ENCODE measurements at regions of chr12 and their contacts with region 1.

Region 1: GRCh38 chr12:56266693-56267442 is at the start of gene COQ10A:
- DNase-seq: peak; percentile 86 to 95
- ATAC-seq: peak; percentile 91 to 98 (median 91)
- H3K4me3 ChIP-seq: peak within 1 kb of the TSS; percentile 88
- H3K4me3 Mint-ChIP-seq: peak within 1 kb of the TSS; percentile 95
- H3K27ac ChIP-seq: peak within 1 kb of the TSS; percentile 99
- H3K27ac Mint-ChIP-seq: peak within 1 kb of the TSS; percentile 94 to 95
- H3K4me1 ChIP-seq: peaks cover 16% of the 10 kb centered on the region
- H3K4me1 Mint-ChIP-seq: peaks cover 9 to 20% of the 10 kb centered on the region in 2 donors
- H3K27me3 ChIP-seq: no peaks in the 10 kb centered on the region
- H3K27me3 Mint-ChIP-seq: no peaks in the 10 kb centered on the region
- CTCF ChIP-seq: peak; percentile 46
- total RNA-seq, gene COQ10A: 27.2 to 37.9 (median 30.2) TPM

Region 2: GRCh38 chr12:56299853-56300643 is 33.2 kb after region 1 on chr12 and contains the start of gene CS:
- intact Hi-C with region 1: loop called (anchors 2 kb)
- DNase-seq: peak; percentile 98 to 99
- ATAC-seq: peak; percentile 95 to 99 (median 96)
- H3K4me3 ChIP-seq: peak within 1 kb of the TSS; percentile 72
- H3K4me3 Mint-ChIP-seq: peak within 1 kb of the TSS; percentile 93
- H3K27ac ChIP-seq: peak within 1 kb of the TSS; percentile 88
- H3K27ac Mint-ChIP-seq: peak within 1 kb of the TSS; percentile 97 to 98
- H3K4me1 ChIP-seq: peaks cover 34% of the 10 kb centered on the region
- H3K4me1 Mint-ChIP-seq: peaks cover 55 to 56% of the 10 kb centered on the region in 2 donors
- H3K27me3 ChIP-seq: no peaks in the 10 kb centered on the region
- H3K27me3 Mint-ChIP-seq: no peaks in the 10 kb centered on the region
- CTCF ChIP-seq: no peak
- total RNA-seq, gene CS: 185 to 190 (median 188) TPM

Region 3: GRCh38 chr12:56413392-56413791 is 146.5 kb after region 1 on chr12:
- intact Hi-C with region 1: no loop called
- DNase-seq: no peak
- ATAC-seq: no peak
- H3K4me3 ChIP-seq: no peak overlapping the region
- H3K4me3 Mint-ChIP-seq: no peak overlapping the region
- H3K27ac ChIP-seq: no peak overlapping the region
- H3K27ac Mint-ChIP-seq: no peak overlapping the region
- H3K4me1 ChIP-seq: no peaks in the 10 kb centered on the region
- H3K4me1 Mint-ChIP-seq: no peaks in the 10 kb centered on the region
- H3K27me3 ChIP-seq: no peaks in the 10 kb centered on the region
- H3K27me3 Mint-ChIP-seq: no peaks in the 10 kb centered on the region
- CTCF ChIP-seq: no peak

Measured in natural killer cell (primary cell).